Activated CD8-positive, alpha-beta T cell treated with anti-CD3 and anti-CD28 coated beads, Interleukin-2, amount 10 ng/mL, durations not matched to agents 7 days and 5 days (primary cell): ENCODE measurements at regions of chr10 and their contacts with region 1.

Region 1: GRCh38 chr10:47047671-47048525 is 136.7 kb downstream of the PTPN20 start:
- DNase-seq: peak; percentile 80
- ATAC-seq: peak; percentile 85
- H3K4me3 Mint-ChIP-seq: no peak overlapping the region
- H3K27ac Mint-ChIP-seq: peak overlapping the region; percentile 67
- H3K4me1 Mint-ChIP-seq: peaks cover 13% of the 10 kb centered on the region
- H3K27me3 Mint-ChIP-seq: no peaks in the 10 kb centered on the region

Region 2: GRCh38 chr10:47024399-47025252 is 23.3 kb before region 1 on chr10:
- CTCF ChIA-PET with region 1: interaction called, 20 read pairs
- POLR2A ChIA-PET with region 1: no interaction called
- DNase-seq: peak; percentile 76
- ATAC-seq: peak; percentile 86
- H3K4me3 Mint-ChIP-seq: no peak overlapping the region
- H3K27ac Mint-ChIP-seq: no peak overlapping the region
- H3K4me1 Mint-ChIP-seq: no peaks in the 10 kb centered on the region
- H3K27me3 Mint-ChIP-seq: no peaks in the 10 kb centered on the region

Region 3: DNA sequence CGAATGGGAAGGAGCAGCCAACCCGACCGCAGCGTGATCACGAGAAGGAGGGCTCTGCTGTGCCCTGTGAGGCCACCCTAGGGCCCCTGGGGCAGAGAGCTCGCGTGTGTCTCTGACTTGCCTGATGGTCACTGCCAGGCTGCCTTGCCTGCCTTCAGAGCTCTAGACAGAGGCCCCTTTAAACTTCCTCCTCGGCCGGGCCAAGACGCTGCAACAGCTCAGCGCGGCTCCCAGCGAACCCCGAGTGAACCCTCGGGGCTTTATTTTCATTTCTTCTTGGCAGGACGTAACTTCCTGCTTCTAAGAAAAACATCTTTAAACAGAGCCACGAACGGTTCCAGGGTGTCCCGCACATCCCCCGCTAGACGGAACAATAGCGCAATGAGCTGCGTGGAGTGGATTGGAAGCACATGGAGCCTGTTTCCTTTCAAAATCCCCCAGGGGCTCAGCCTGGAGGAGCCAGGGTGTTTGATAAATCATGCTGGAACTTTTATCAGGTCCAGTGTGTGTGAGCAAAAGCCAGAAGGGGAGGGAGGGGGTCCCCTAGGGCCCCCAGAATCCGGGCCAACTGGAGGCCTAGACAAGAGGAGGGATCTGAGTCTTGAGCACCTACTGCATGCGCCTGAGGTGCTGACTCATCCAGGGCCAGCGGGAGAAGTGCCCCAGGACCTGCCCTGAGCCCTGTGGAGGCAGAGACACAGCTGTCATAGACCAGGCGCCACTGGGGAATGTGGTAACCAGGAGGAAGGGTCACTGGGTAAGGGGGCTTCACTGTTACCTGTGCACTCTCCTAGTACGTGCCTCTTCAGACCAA is 118.0 kb after region 1 on chr10:
- CTCF ChIA-PET with region 1: interaction called, 23 read pairs
- POLR2A ChIA-PET with region 1: no interaction called
- DNase-seq: peak; percentile 59
- ATAC-seq: peak; percentile 85
- H3K4me3 Mint-ChIP-seq: peak overlapping the region; percentile 75
- H3K27ac Mint-ChIP-seq: peak overlapping the region; percentile 90
- H3K4me1 Mint-ChIP-seq: peaks cover 24% of the 10 kb centered on the region
- H3K27me3 Mint-ChIP-seq: peaks cover 2% of the 10 kb centered on the region

Region 4: DNA sequence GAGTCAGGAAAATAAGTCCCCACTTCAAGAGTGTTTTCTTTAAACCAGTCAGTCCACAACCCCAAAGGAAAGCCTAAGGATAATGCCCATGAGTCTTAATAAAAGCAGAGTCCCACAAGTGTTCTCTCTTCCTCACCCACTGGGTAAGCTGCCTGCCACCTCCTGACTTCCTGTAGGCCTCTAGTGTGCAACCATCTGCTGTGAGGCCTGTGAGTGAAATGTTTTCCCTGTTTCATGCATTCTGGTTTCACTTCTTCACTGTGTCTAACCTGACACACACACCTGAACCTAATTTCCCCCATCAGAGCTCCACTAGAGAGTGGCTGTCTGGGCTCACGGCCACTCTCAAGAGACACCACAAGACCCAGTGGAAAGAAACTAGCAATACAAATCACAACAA is 213.2 kb after region 1 on chr10:
- CTCF ChIA-PET with region 1: interaction called, 12 read pairs
- POLR2A ChIA-PET with region 1: no interaction called
- DNase-seq: peak; percentile 56
- ATAC-seq: peak; percentile 46
- H3K4me3 Mint-ChIP-seq: peak overlapping the region; percentile 2
- H3K27ac Mint-ChIP-seq: peak overlapping the region; percentile 90
- H3K4me1 Mint-ChIP-seq: peaks cover 89% of the 10 kb centered on the region
- H3K27me3 Mint-ChIP-seq: no peaks in the 10 kb centered on the region

Region 5: DNA sequence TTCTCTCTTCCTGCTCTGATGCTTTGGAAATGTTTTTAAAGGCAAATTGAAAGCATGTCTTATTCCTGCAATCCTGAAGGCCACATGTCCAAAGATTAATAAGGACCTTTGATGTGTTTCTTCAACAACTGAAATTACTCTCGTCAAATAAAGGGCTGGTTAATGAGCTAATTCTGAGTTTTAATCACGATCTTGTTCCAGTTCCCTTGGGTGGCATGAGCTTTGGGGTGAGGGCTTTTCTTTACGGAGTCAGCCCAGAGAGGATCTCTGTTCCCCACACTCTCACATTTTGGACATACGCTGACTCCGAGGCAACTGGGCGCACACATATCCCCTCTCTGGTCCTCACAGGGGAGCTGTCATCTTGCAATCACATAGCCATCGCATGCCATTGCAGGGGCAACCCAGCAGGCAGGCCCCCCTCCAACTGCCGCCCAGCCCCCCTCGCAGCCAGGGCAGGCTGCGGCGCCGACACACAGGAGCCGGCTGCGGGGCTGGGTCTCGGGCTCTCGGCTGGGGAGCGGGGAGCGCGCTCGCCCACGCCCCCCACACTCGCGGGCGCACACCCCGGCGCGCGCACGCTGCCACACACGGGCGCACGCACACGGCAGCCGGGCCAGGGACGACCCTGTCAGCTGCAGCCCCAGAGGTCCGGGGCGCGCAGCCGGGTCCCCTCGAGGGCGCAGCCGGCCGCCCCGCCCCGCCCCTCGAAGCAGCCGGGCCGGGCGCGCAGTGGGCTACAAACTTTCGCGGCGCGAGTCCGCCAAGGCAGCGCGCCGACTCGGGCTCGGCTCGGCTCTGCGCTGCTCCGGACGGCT is 251.9 kb after region 1 on chr10 and contains the start of gene GDF10:
- CTCF ChIA-PET with region 1: interaction called, 10 read pairs
- POLR2A ChIA-PET with region 1: no interaction called
- DNase-seq: no peak
- ATAC-seq: peak; percentile 60
- H3K4me3 Mint-ChIP-seq: peak within 1 kb of the TSS; percentile 24
- H3K27ac Mint-ChIP-seq: no peak within 1 kb of the TSS
- H3K4me1 Mint-ChIP-seq: peaks cover 3% of the 10 kb centered on the region
- H3K27me3 Mint-ChIP-seq: peaks cover 38% of the 10 kb centered on the region
- total RNA-seq, gene GDF10: not detected

Region 6: GRCh38 chr10:47311932-47312662 is 264.2 kb after region 1 on chr10:
- CTCF ChIA-PET with region 1: interaction called, 238 read pairs
- POLR2A ChIA-PET with region 1: interaction called, 14 read pairs
- DNase-seq: peak; percentile 89
- ATAC-seq: peak; percentile 90
- H3K4me3 Mint-ChIP-seq: peak overlapping the region; percentile 54
- H3K27ac Mint-ChIP-seq: peak overlapping the region; percentile 86
- H3K4me1 Mint-ChIP-seq: peaks cover 18% of the 10 kb centered on the region
- H3K27me3 Mint-ChIP-seq: no peaks in the 10 kb centered on the region

Region 7: DNA sequence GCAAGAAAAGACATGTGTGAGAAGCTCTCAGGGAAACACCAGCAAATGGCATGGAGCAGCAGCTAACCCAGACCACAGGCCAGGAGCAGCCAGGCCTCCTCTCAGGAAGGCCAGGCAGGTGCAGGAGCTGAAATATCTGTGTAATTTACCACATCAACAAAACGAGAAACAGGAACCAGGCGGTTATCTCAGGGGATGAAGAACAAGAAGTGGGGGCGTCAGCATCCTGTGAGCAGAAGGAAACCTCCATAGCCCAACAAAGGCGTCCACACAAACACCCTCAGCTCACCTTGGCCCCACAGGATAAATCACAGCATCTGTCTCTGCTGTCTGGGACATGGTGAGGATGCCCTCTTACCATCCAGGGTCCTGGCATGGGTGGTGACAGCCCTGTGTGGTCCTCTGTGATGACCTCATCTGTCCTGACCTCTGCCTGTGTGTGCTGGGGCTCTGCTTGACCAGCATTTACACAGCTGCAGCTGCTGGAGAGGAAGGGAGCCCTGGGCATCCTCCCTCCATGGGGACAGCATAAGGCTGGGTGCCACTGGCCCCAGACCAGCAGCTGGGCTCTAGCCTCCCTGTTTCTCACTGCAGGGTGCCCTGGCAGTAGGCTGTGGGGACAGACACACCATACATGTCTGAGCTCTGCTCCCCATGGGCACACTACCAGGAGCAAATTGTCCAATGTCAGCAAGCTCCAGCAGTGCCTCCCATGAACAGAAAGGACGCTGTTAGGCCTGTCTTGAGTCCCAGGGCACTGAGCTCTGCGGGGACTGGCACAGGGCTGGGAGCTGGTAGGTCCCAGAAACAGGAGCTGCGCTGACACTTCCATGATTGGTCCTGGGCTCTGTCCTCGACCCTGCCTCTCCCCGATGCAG is 401.4 kb after region 1 on chr10:
- CTCF ChIA-PET with region 1: no interaction called
- POLR2A ChIA-PET with region 1: no interaction called
- DNase-seq: no peak
- ATAC-seq: peak; percentile 12
- H3K4me3 Mint-ChIP-seq: no peak overlapping the region
- H3K27ac Mint-ChIP-seq: no peak overlapping the region
- H3K4me1 Mint-ChIP-seq: no peaks in the 10 kb centered on the region
- H3K27me3 Mint-ChIP-seq: peaks cover 6% of the 10 kb centered on the region